ENCODE measurements at regions of chr20 and their contacts with region 1.

Region 1: GRCh38 chr20:37734228-37734985 is 40.6 kb downstream of the CTNNBL1 start:
- DNase-seq: no peak
- CTCF ChIP-seq: no peak

Region 2: GRCh38 chr20:37584238-37584807 is 150.1 kb before region 1 on chr20:
- CTCF ChIA-PET with region 1: no interaction called
- POLR2A ChIA-PET with region 1: no interaction called
- DNase-seq: no peak
- CTCF ChIP-seq: no peak

Region 3: GRCh38 chr20:37749620-37750403 is 15.4 kb after region 1 on chr20:
- CTCF ChIA-PET with region 1: interaction called, 16 read pairs
- POLR2A ChIA-PET with region 1: no interaction called
- DNase-seq: peak; percentile 15
- CTCF ChIP-seq: no peak